ENCODE measurements at regions of chr21 and their contacts with region 1.

Region 1: GRCh38 chr21:36174780-36175179 is 18.2 kb downstream of the DOP1B start:
- DNase-seq: no peak
- H3K4me3 Mint-ChIP-seq: no peak overlapping the region
- H3K27ac Mint-ChIP-seq: peak overlapping the region; percentile 69
- H3K4me1 Mint-ChIP-seq: peaks cover 41% of the 10 kb centered on the region
- H3K27me3 Mint-ChIP-seq: no peaks in the 10 kb centered on the region

Region 2: DNA sequence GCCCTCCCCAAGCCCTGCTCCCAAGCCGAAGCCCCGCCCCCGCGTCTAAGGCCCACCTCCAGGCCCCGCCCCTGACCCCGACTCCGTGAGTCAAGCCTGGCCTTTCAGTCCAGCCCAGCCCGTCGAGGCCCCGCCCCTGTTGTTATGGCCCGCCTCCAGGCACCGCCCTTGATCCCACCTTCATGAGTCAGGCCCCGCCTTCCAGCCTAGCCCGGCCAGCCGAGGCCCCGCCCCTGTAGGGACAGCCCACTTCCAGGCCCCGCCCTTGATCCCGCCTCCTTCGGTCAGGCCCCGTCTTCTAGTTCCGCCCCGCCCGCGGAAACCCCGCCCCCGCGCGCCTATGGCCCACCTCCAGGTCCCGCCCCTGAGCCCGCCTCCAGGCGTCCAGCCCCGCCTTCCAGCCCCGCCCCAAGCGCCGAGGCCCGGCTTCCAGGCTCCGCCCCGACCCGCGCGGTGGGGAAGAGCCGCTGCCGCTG is 18.4 kb before region 1 on chr21:
- CTCF ChIA-PET with region 1: interaction called, 10 read pairs
- DNase-seq: peak; percentile 100
- H3K4me3 Mint-ChIP-seq: peak overlapping the region; percentile 78
- H3K27ac Mint-ChIP-seq: peak overlapping the region; percentile 60
- H3K4me1 Mint-ChIP-seq: peaks cover 46% of the 10 kb centered on the region
- H3K27me3 Mint-ChIP-seq: peaks cover 11% of the 10 kb centered on the region

Region 3: DNA sequence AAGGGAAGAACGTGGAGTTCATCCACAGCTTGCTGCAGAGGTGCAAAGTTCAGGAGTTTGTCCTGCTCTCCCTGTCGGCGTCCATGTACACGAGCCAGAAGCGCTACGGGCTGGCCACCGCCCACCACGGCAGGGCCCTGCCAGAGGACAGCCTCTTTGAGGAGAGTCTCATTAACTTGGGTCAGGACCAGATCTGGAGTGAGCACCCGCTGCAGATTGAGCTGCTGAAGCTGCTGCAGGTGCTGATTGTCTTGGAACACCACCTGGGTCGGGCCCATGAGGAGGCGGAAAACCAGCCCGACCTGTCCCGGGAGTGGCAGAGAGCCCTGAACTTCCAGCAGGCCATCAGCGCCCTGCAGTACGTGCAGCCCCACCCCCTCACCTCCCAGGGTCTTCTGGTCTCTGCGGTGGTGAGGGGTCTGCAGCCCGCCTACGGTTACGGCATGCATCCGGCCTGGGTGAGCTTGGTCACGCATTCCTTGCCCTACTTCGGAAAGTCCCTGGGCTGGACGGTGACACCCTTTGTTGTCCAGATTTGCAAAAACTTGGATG is 71.4 kb after region 1 on chr21:
- CTCF ChIA-PET with region 1: no interaction called
- DNase-seq: no peak
- H3K4me3 Mint-ChIP-seq: no peak overlapping the region
- H3K27ac Mint-ChIP-seq: no peak overlapping the region
- H3K4me1 Mint-ChIP-seq: peaks cover 25% of the 10 kb centered on the region
- H3K27me3 Mint-ChIP-seq: no peaks in the 10 kb centered on the region

Measured in activated naive CD4-positive, alpha-beta T cell treated with anti-CD3 and anti-CD28 coated beads, Interleukin-2, amount 10 ng/mL, durations not matched to agents 7 days and 5 days (primary cell).